Caco-2 (cell line): ENCODE measurements at regions of chr5 and their contacts with region 1.

Region 1: GRCh38 chr5:11524188-11524587 is 380.1 kb downstream of the CTNND2 start:
- DNase-seq: peak; percentile 45 to 47
- H3K4me3 ChIP-seq: no peak overlapping the region
- H3K4me3 Mint-ChIP-seq: no peak overlapping the region
- H3K27ac Mint-ChIP-seq: peak overlapping the region; percentile 77
- H3K4me1 ChIP-seq: peaks cover 50% of the 10 kb centered on the region
- H3K4me1 Mint-ChIP-seq: peaks cover 30% of the 10 kb centered on the region
- H3K27me3 ChIP-seq: no peaks in the 10 kb centered on the region
- H3K27me3 Mint-ChIP-seq: no peaks in the 10 kb centered on the region
- CTCF ChIP-seq: no peak

Region 2: DNA sequence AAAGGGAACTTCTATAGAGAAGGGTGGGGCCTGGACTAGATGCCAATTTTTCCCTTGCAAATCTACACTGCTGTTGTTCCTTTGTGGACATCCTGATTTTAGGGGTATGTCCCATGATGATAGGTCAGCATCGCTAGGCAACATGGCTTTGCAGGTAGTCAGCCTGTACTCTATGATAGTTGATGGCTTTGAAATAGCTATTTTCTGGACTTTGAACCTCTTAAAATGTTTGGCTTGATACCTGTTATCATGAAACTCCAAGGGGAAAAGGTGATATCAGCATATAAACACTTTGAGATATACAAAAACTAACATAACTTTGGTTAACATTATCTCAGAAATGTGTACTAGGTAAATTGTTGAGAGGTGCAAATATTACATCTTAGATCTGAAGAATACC is 153.2 kb before region 1 on chr5:
- CTCF ChIA-PET with region 1: no interaction called
- POLR2A ChIA-PET with region 1: no interaction called
- intact Hi-C with region 1: loop called (anchors 2 kb)
- DNase-seq: peak; percentile 71 to 81
- H3K4me3 ChIP-seq: no peak overlapping the region
- H3K4me3 Mint-ChIP-seq: no peak overlapping the region
- H3K27ac Mint-ChIP-seq: peak overlapping the region; percentile 1
- H3K4me1 ChIP-seq: peaks cover 46% of the 10 kb centered on the region
- H3K4me1 Mint-ChIP-seq: no peaks in the 10 kb centered on the region
- H3K27me3 ChIP-seq: no peaks in the 10 kb centered on the region
- H3K27me3 Mint-ChIP-seq: no peaks in the 10 kb centered on the region
- CTCF ChIP-seq: no peak

Region 3: DNA sequence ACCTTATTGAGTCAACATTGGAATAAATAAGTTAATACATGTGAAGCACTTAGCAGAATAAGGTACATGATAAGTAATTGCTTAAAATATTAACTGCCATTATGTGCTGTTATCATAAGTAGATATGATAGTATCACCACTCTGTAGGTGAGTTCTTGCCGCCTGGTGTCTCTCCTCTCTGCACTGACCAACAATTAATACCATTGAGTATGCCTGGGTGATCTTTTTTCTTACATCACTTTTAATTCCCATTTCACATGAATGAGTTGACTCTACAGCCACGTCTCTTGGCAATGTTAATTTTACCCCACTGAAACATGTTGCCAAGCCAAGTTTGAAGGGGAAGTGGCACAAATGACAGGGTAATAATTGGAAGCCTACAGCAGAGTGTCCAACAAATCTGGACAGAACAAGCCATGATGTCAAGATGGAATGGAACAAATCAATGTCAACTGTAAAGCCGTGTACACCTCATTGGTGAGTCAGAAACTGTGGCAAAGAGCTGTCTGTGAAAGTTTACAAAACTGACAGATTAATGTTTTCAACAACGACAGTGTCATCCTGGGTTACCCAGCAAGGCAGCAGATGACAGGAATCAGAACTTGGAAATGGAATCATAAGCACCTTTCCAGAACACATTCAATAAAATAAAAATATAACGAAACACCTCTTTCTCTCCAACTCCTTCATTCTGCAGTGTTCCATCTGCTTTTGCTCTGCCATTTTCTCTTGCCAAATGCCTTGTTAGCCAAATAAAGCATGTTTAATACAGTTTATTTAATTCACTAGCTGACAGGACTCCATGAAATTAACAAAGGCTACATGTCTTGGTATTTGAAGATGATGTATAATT is 49.2 kb after region 1 on chr5:
- CTCF ChIA-PET with region 1: no interaction called
- POLR2A ChIA-PET with region 1: no interaction called
- intact Hi-C with region 1: no loop called
- DNase-seq: no peak
- H3K4me3 ChIP-seq: no peak overlapping the region
- H3K4me3 Mint-ChIP-seq: no peak overlapping the region
- H3K27ac Mint-ChIP-seq: no peak overlapping the region
- H3K4me1 ChIP-seq: no peaks in the 10 kb centered on the region
- H3K4me1 Mint-ChIP-seq: no peaks in the 10 kb centered on the region
- H3K27me3 ChIP-seq: no peaks in the 10 kb centered on the region; the same call in 1 of the 2 replicates
- H3K27me3 Mint-ChIP-seq: no peaks in the 10 kb centered on the region
- CTCF ChIP-seq: no peak

Region 4: DNA sequence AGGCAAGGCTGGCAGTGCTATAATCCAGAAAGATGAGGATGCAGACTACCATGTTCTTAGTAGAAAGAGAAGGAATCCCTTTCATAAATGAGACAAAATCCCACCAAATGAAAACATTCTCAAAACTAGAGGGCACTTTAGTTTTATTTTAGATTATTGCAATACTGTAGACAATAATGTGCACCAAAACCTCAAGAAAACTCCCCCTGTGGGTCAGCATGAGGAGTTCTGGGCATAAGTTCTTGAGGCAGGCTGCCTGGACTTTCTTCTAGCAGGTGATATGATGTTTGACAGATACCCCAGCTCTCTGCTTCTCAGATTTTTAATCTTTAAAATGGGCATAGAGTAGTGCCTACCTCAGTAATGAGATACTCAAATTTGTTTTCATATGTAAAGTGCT is 576.4 kb after region 1 on chr5:
- CTCF ChIA-PET with region 1: no interaction called
- POLR2A ChIA-PET with region 1: no interaction called
- intact Hi-C with region 1: loop called (anchors 10 kb)
- DNase-seq: no peak
- H3K4me3 ChIP-seq: no peak overlapping the region
- H3K4me3 Mint-ChIP-seq: no peak overlapping the region
- H3K27ac Mint-ChIP-seq: no peak overlapping the region
- H3K4me1 ChIP-seq: no peaks in the 10 kb centered on the region
- H3K4me1 Mint-ChIP-seq: no peaks in the 10 kb centered on the region
- H3K27me3 ChIP-seq: no peaks in the 10 kb centered on the region
- H3K27me3 Mint-ChIP-seq: no peaks in the 10 kb centered on the region
- CTCF ChIP-seq: peak in 1 of 2 experiments; percentile 21